HEK293 (cell line): ENCODE measurements at regions of chr2 and their contacts with region 1.

Region 1: DNA sequence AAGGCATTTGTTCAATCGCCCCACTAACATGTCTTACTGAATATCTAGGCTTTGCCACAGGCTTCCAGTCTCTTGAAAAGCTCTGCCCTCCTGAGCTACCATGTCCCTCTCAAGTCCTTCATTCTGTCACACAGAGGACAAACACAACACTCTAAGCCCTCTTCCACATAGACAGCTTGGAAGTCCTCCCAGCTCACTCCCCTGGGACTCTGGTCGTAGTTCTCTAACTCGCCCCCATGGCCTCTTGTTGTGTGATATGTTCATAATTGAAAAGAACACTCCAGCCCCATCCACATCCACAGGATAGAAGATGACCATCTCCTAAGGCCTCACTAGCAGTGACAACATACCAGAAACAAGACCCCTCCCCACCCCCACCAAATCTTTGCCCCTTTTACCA is 37.9 kb downstream of the BUB1 start:
- H3K4me3 ChIP-seq: no peak overlapping the region
- H3K27ac ChIP-seq: no peak overlapping the region
- H3K4me1 ChIP-seq: no peaks in the 10 kb centered on the region
- CTCF ChIP-seq: no peak

Region 2: GRCh38 chr2:110837446-110838405 is 197.8 kb after region 1 on chr2:
- CTCF ChIA-PET with region 1: no interaction called
- POLR2A ChIA-PET with region 1: interaction called, 10 read pairs
- H3K4me3 ChIP-seq: no peak overlapping the region
- H3K27ac ChIP-seq: no peak overlapping the region
- H3K4me1 ChIP-seq: peaks cover 10% of the 10 kb centered on the region
- CTCF ChIP-seq: no peak

Region 3: DNA sequence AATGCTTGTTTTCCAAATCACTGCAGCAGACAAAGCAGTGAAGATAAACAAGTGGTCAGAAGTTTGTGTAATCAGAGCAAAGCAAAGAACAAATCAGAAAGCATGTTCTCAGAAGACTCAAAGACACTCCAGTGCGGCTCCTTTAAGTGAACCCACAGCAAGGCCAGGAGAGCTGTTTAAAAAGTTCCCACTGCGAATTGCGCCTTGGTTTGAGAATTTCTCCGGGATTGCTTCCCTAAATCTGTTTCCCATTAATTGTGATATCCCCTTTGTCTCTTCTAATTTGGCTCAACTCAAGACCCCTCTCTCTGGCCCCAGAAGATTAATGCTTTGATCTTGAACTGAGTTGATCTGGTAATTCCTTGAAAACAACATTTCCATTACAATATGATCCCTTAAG is 358.3 kb after region 1 on chr2:
- CTCF ChIA-PET with region 1: no interaction called
- POLR2A ChIA-PET with region 1: no interaction called
- H3K4me3 ChIP-seq: no peak overlapping the region
- H3K27ac ChIP-seq: no peak overlapping the region
- H3K4me1 ChIP-seq: no peaks in the 10 kb centered on the region
- CTCF ChIP-seq: no peak